AG04449 (cell line): ENCODE measurements at regions of chr7 and their contacts with region 1.

Region 1: DNA sequence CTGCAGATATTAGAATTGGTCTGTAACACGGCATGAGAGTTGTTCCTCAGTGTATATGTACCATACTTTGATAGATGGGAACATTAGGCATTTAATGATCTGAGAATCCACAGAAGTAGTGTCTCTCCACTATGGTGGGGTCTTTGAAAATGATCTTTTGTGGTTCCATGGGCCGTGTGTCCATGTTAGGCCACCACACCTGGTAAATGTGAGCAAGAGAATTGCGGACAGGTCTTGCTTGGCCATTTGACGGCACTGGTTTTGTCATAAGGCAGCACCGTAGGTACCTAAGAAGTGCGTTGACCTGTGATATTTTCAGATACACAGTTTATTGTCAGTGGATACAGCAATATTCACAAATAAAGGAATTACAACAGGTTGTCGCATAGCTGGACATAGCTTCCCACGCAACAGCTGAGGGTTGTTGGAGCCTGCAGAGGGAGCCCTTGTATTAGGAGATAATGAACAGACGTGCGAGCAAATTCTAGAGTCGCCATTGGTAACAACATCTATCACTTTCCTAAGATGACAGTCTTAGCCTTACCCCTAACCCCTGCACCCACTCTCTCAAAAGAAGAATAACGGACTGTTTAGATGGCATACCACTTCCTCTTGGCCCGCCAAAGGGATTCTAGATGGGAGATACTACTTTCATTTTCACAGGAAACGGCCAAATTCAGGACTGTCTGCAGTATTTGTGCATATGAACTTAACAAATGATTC is 111.4 kb downstream of the COL28A1 start:
- DNase-seq: no peak
- H3K4me3 ChIP-seq: peak overlapping the region; percentile 52
- CTCF ChIP-seq: peak; percentile 81

Region 2: DNA sequence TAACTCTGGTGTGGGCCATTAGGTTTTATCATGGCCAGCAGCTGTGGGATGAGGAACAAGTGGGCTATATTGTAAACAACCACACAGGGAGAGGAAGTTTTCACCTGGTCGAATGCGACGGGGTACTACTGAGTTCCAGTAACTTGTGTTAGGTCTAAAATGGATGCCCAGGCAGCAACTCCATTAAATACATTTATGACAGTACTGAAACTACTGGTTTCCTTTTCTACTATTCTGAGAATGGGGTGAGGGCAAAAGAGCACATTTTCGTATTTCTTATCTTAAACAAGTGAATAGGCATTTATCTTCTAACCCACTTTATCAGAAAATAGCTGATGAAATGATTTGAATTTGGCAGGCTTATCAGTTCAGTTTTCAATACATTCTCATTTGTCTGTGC is 132.2 kb before region 1 on chr7:
- CTCF ChIA-PET with region 1: no interaction called
- POLR2A ChIA-PET with region 1: no interaction called
- DNase-seq: no peak
- H3K4me3 ChIP-seq: no peak overlapping the region
- CTCF ChIP-seq: no peak

Region 3: DNA sequence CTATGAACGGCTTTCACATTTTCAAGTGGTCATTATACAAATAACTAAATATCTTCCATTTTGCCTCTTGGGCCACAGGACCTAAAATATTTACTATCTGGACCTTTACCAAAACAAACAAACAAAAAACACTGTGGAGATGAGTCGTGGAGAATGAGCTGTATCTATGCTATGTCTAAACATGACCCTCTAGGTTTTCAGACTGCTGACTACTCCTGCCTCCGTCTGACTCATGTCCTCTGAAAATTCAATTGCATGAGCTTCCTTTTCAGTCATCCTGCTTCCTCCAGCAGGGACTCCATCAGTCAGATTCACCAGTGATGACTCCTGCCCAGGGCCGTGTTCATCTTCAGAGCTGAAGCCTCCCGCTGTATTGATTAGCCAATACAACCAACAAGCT is 14.5 kb after region 1 on chr7:
- CTCF ChIA-PET with region 1: interaction called, 28 read pairs
- POLR2A ChIA-PET with region 1: interaction called, 7 read pairs
- DNase-seq: peak; percentile 97
- H3K4me3 ChIP-seq: no peak overlapping the region
- CTCF ChIP-seq: no peak

Region 4: GRCh38 chr7:7529328-7529727 is 105.0 kb after region 1 on chr7:
- CTCF ChIA-PET with region 1: interaction called, 230 read pairs
- POLR2A ChIA-PET with region 1: no interaction called
- DNase-seq: no peak
- H3K4me3 ChIP-seq: no peak overlapping the region
- CTCF ChIP-seq: no peak

Region 5: GRCh38 chr7:7535691-7536090 is 111.4 kb after region 1 on chr7 and contains the start of gene COL28A1:
- CTCF ChIA-PET with region 1: interaction called, 230 read pairs
- POLR2A ChIA-PET with region 1: no interaction called
- DNase-seq: no peak
- H3K4me3 ChIP-seq: no peak within 1 kb of the TSS
- CTCF ChIP-seq: no peak